Panc1 (cell line): ENCODE measurements at regions of chr13 and their contacts with region 1.

Region 1: GRCh38 chr13:95858286-95859075 is 181.5 kb downstream of the DNAJC3 start:
- DNase-seq: no peak
- ATAC-seq: peak; percentile 71
- H3K4me3 ChIP-seq: no peak overlapping the region
- H3K27ac ChIP-seq: peak overlapping the region; percentile 73
- H3K4me1 ChIP-seq: peaks cover 5% of the 10 kb centered on the region; the same call in 1 of the 2 replicates
- H3K27me3 ChIP-seq: no peaks in the 10 kb centered on the region
- CTCF ChIP-seq: no peak

Region 2: GRCh38 chr13:95023405-95023804 is 835.1 kb before region 1 on chr13:
- CTCF ChIA-PET with region 1: no interaction called
- POLR2A ChIA-PET with region 1: interaction called, 11 read pairs
- in situ Hi-C with region 1: no loop called
- intact Hi-C with region 1: no loop called
- DNase-seq: no peak
- ATAC-seq: no peak
- H3K4me3 ChIP-seq: no peak overlapping the region
- H3K27ac ChIP-seq: no peak overlapping the region
- H3K4me1 ChIP-seq: no peaks in the 10 kb centered on the region
- H3K27me3 ChIP-seq: no peaks in the 10 kb centered on the region
- CTCF ChIP-seq: no peak

Region 3: GRCh38 chr13:95931300-95932025 is 73.0 kb after region 1 on chr13:
- CTCF ChIA-PET with region 1: no interaction called
- POLR2A ChIA-PET with region 1: interaction called, 13 read pairs
- in situ Hi-C with region 1: no loop called
- intact Hi-C with region 1: no loop called
- DNase-seq: no peak
- ATAC-seq: no peak
- H3K4me3 ChIP-seq: no peak overlapping the region
- H3K27ac ChIP-seq: no peak overlapping the region
- H3K4me1 ChIP-seq: no peaks in the 10 kb centered on the region
- H3K27me3 ChIP-seq: no peaks in the 10 kb centered on the region
- CTCF ChIP-seq: no peak